Natural killer cell (primary cell): ENCODE measurements at regions of chrX and their contacts with region 1.

Region 1: DNA sequence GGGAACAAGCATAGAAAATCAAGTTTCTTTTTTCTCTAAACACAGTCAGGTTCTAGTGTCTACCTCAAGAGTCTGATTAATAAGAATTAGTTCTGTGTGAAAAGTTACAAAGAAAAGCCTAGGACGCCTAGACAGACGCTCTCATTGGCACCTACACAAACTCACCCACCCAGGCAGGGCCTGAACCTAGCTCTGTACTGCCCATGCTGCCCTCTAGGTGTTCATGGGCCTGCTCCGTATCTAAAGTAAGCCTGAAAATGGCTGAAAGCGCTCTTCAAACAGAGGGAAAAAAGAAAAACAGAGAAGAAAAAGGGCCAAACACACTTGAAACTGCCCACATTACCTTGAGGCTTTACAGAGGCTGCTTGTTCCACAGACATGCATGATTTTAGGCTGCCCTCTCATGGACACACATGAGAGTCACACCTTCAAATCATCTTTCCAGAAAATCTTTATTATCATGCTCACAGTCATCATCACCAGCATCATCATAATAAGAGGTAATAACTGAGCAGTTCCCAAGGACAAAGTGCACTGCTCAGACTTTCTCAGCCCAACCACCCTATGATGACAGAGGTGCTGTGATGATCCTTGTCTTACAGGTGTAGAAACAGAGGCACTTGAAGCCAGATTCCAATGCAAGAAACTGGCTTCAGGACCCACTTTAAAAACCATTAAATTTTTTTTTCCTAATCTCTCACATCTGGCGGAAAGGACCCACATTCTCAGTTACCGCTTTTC is 49.6 kb downstream of the MAP7D2 start:
- DNase-seq: peak in 1 of 2 donors; percentile 60
- ATAC-seq: peak; percentile 47 to 72 (median 61)
- H3K4me3 ChIP-seq: no peak overlapping the region
- H3K4me3 Mint-ChIP-seq: no peak overlapping the region
- H3K27ac ChIP-seq: no peak overlapping the region
- H3K27ac Mint-ChIP-seq: no peak overlapping the region
- H3K4me1 ChIP-seq: no peaks in the 10 kb centered on the region
- H3K4me1 Mint-ChIP-seq: no peaks in the 10 kb centered on the region
- H3K27me3 ChIP-seq: no peaks in the 10 kb centered on the region
- H3K27me3 Mint-ChIP-seq: peaks cover 0 to 5% of the 10 kb centered on the region in 2 donors
- CTCF ChIP-seq: no peak

Region 2: DNA sequence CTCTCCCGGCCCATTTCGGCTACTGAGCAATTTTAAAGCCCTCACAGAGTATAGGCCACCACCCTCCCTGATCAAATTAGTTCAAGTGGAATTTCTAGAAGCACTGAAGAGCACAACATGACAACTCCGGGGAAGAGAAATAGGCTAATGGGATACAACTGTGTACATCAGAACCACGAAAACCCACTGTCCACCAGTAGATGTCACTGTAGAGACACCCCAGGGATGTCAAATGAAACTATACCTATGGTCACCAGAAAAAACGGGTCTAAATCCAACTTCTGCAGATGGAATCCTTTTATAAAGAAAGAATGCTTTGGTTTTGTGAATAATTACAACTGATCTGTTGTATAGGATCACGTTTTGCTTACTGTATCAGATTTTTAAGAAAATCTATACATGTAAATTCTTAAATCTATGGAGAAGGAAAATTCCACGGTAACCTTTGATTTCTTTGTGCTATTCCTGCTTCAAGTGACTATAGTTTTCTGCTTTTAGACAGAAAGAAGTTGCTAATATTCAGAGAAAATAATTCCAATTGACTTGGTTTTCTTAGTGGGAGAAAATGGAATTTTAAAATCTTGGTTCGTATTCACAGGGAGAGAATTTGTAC is 522.3 kb before region 1 on chrX:
- intact Hi-C with region 1: loop called (anchors 5 kb)
- DNase-seq: peak in 1 of 2 donors; percentile 68
- ATAC-seq: peak; percentile 63 to 79 (median 72)
- H3K4me3 ChIP-seq: no peak overlapping the region
- H3K4me3 Mint-ChIP-seq: no peak overlapping the region
- H3K27ac ChIP-seq: no peak overlapping the region
- H3K27ac Mint-ChIP-seq: peak overlapping the region in 1 of 2 donors; percentile 68
- H3K4me1 ChIP-seq: no peaks in the 10 kb centered on the region
- H3K4me1 Mint-ChIP-seq: peaks cover 8 to 24% of the 10 kb centered on the region in 2 donors
- H3K27me3 ChIP-seq: no peaks in the 10 kb centered on the region
- H3K27me3 Mint-ChIP-seq: no peaks in the 10 kb centered on the region
- CTCF ChIP-seq: peak; percentile 63

Region 3: GRCh38 chrX:20101934-20102581 is 34.9 kb after region 1 on chrX:
- intact Hi-C with region 1: no loop called
- DNase-seq: no peak
- ATAC-seq: no peak
- H3K4me3 ChIP-seq: no peak overlapping the region
- H3K4me3 Mint-ChIP-seq: no peak overlapping the region
- H3K27ac ChIP-seq: no peak overlapping the region
- H3K27ac Mint-ChIP-seq: no peak overlapping the region
- H3K4me1 ChIP-seq: no peaks in the 10 kb centered on the region
- H3K4me1 Mint-ChIP-seq: no peaks in the 10 kb centered on the region
- H3K27me3 ChIP-seq: no peaks in the 10 kb centered on the region
- H3K27me3 Mint-ChIP-seq: peaks cover 0 to 2% of the 10 kb centered on the region in 2 donors
- CTCF ChIP-seq: no peak

Region 4: GRCh38 chrX:20585782-20586181 is 518.6 kb after region 1 on chrX:
- intact Hi-C with region 1: no loop called
- DNase-seq: no peak
- ATAC-seq: no peak
- H3K4me3 ChIP-seq: no peak overlapping the region
- H3K4me3 Mint-ChIP-seq: no peak overlapping the region
- H3K27ac ChIP-seq: no peak overlapping the region
- H3K27ac Mint-ChIP-seq: no peak overlapping the region
- H3K4me1 ChIP-seq: no peaks in the 10 kb centered on the region
- H3K4me1 Mint-ChIP-seq: no peaks in the 10 kb centered on the region
- H3K27me3 ChIP-seq: no peaks in the 10 kb centered on the region
- H3K27me3 Mint-ChIP-seq: peaks cover 0 to 7% of the 10 kb centered on the region in 2 donors
- CTCF ChIP-seq: no peak

Region 5: GRCh38 chrX:20961688-20962087 is 894.5 kb after region 1 on chrX:
- intact Hi-C with region 1: no loop called
- DNase-seq: no peak
- ATAC-seq: no peak
- H3K4me3 ChIP-seq: no peak overlapping the region
- H3K4me3 Mint-ChIP-seq: no peak overlapping the region
- H3K27ac ChIP-seq: no peak overlapping the region
- H3K27ac Mint-ChIP-seq: no peak overlapping the region
- H3K4me1 ChIP-seq: no peaks in the 10 kb centered on the region
- H3K4me1 Mint-ChIP-seq: no peaks in the 10 kb centered on the region
- H3K27me3 ChIP-seq: no peaks in the 10 kb centered on the region
- H3K27me3 Mint-ChIP-seq: no peaks in the 10 kb centered on the region
- CTCF ChIP-seq: no peak